Activated T-helper 2 cell treated with anti-CD3 and anti-CD28 coated beads, Interferon-gamma antibody, Interleukin-2, Interleukin-4, amounts not matched to agents 10 μg/mL and 5 μg/mL and 100 μg/mL, durations not matched to agents 14 hours and 24 hours and 36 hours (primary cell): ENCODE measurements at regions of chr1 and their contacts with region 1.

Region 1: GRCh38 chr1:205658943-205659581 is 21.2 kb downstream of the SLC45A3 start:
- DNase-seq: peak; percentile 65
- H3K4me3 Mint-ChIP-seq: no peak overlapping the region
- H3K27ac Mint-ChIP-seq: no peak overlapping the region
- H3K4me1 Mint-ChIP-seq: peaks cover 1% of the 10 kb centered on the region
- H3K27me3 Mint-ChIP-seq: no peaks in the 10 kb centered on the region

Region 2: DNA sequence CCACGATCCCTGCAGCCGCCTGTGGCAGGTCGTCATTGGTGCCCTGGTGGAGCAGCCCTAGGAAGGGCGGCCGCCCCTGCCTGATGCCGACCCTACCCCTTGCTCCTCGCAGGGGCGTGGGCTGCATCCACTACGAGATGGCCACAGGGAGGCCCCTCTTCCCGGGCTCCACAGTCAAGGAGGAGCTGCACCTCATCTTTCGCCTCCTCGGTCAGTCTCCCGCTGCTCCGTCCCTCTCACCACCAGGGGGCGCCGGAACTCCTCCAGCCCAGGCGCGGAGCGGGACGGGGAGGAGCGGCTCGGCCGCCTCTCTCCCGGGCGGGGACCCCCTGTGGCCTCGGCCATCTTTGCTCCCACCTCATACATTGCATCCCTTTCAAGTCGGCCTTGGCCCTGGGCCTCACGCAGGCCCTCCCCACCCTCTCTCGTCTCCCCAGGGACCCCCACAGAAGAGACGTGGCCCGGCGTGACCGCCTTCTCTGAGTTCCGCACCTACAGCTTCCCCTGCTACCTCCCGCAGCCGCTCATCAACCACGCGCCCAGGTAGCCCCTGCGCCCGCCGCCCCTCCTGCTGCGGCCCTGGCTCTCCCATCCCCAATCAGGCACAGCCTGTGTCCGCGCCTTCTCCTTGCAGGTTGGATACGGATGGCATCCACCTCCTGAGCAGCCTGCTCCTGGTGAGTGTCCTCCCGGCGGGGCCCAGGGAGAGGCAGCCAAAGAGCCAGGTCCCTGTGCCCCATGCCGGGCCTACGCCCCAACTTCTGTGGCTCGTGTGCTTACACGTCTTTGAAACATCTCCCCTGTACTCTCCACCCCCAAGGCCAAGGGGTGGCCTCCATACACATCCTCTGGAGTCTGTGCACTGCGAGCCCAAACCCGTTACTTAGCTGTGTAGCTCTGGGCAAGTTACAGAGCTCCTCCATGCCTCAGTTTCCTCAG is 129.9 kb before region 1 on chr1:
- intact Hi-C with region 1: loop called (anchors 1 kb)
- DNase-seq: peak; percentile 70
- H3K4me3 Mint-ChIP-seq: peak overlapping the region; percentile 37
- H3K27ac Mint-ChIP-seq: no peak overlapping the region
- H3K4me1 Mint-ChIP-seq: peaks cover 3% of the 10 kb centered on the region
- H3K27me3 Mint-ChIP-seq: peaks cover 11% of the 10 kb centered on the region

Region 3: GRCh38 chr1:205591522-205592351 is 67.3 kb before region 1 on chr1:
- intact Hi-C with region 1: loop called (anchors 2 kb)
- DNase-seq: peak; percentile 80
- H3K4me3 Mint-ChIP-seq: peak overlapping the region; percentile 82
- H3K27ac Mint-ChIP-seq: peak overlapping the region; percentile 75
- H3K4me1 Mint-ChIP-seq: peaks cover 51% of the 10 kb centered on the region
- H3K27me3 Mint-ChIP-seq: no peaks in the 10 kb centered on the region

Region 4: GRCh38 chr1:205645519-205645918 is 13.5 kb before region 1 on chr1:
- intact Hi-C with region 1: no loop called
- DNase-seq: no peak
- H3K4me3 Mint-ChIP-seq: no peak overlapping the region
- H3K27ac Mint-ChIP-seq: no peak overlapping the region
- H3K4me1 Mint-ChIP-seq: no peaks in the 10 kb centered on the region
- H3K27me3 Mint-ChIP-seq: peaks cover 4% of the 10 kb centered on the region

Region 5: DNA sequence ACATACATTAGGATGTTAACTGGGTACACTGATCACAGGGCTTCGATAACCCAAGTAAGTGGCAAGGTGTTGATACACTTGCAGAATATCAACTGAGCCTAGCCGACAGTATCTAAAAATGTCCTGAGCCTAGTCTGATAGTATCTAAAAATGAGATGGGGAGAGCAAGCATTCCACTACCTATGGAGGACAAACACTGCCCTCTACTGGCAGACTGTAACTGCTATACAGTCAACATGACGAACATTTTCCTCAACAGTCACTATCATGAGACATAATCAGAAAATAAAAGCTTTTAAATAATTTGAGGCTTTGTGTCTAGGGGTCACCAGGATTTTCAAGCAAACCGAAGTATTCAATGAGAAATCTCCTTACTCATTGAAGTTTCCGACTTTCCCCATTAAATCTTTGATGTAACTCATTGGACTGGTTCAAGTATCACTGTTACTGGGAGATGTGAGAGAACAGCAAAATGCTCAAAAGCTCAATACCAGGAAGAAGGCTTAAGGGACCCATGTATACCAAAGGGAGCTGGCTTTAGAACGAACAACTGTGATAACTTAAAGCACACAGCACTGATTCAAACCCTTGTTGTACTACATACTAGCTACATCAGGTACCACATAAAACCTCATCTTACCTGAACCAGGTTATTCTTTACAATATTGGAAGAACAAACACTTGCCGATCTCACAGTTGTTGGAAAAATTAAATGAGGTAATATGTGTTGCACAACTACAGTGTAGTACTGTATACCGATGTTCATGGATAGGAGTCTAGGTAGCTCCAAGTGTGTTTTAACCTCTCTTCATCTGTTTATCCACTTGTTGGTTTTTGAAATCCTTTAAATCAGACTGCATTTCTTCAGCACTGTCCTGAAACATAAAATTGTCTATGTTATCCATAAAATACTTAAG is 52.3 kb after region 1 on chr1:
- intact Hi-C with region 1: loop called (anchors 1 kb)
- DNase-seq: peak; percentile 48
- H3K4me3 Mint-ChIP-seq: no peak overlapping the region
- H3K27ac Mint-ChIP-seq: peak overlapping the region; percentile 77
- H3K4me1 Mint-ChIP-seq: peaks cover 19% of the 10 kb centered on the region
- H3K27me3 Mint-ChIP-seq: no peaks in the 10 kb centered on the region

Region 6: DNA sequence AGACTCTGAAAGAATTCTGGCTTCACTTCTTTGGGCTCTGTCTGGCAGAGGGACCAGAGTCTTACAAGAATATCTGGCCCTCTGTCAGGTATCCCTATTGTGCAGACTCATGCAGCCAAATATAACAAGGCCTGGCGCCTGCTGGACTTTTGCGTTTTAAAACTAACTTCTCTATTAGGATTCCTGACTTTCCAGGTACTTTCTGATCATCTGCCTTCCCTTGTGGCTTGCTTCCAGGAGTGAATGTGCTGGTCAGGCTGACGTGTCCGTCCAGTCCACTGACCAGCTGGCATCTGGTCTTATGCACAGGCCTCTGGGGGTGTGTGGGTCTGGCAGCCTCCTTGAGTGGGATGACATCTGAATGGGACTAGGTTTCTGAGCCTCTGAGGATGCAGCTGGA is 124.8 kb after region 1 on chr1:
- intact Hi-C with region 1: loop called (anchors 5 kb)
- DNase-seq: no peak
- H3K4me3 Mint-ChIP-seq: no peak overlapping the region
- H3K27ac Mint-ChIP-seq: no peak overlapping the region
- H3K4me1 Mint-ChIP-seq: peaks cover 12% of the 10 kb centered on the region
- H3K27me3 Mint-ChIP-seq: no peaks in the 10 kb centered on the region

Region 7: DNA sequence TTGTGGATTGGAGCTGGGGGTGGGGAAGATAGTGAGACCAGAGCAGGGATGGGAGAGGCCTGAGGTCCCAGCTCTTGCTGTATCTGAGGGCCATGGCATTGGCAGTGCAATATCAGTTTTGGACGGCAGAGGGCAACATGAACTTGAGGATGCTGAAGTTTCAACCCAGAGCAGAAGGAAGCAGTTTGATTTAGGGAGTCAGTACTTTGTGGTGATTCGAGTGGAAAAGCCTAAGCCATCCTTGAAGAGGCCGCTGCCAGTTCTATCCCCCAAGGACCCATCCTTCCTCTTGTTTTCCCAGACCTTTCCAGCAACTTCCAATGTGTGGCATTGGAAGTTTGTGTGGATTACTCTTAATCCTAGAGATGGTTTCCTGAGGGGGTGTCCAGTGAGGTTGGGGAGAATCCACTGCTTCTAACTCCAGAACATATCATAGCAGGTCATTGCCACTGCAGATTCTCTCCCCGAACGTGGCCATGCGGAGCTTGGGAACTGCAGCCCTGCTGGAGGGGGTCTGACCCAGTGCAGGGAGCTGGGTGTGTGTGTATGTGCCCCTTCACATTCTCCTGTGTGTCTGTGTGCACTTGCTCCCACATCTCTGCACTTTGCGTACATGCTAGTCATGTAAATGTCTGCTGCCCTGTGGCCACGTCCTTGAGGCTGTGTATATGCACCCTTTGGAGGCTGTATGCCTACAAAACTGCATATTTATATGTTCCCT is 260.1 kb after region 1 on chr1:
- intact Hi-C with region 1: loop called (anchors 10 kb)
- DNase-seq: peak; percentile 54
- H3K4me3 Mint-ChIP-seq: no peak overlapping the region
- H3K27ac Mint-ChIP-seq: no peak overlapping the region
- H3K4me1 Mint-ChIP-seq: no peaks in the 10 kb centered on the region
- H3K27me3 Mint-ChIP-seq: no peaks in the 10 kb centered on the region

Region 8: GRCh38 chr1:205977402-205978014 is 318.4 kb after region 1 on chr1:
- intact Hi-C with region 1: loop called (anchors 1 kb)
- DNase-seq: peak; percentile 56
- H3K4me3 Mint-ChIP-seq: no peak overlapping the region
- H3K27ac Mint-ChIP-seq: no peak overlapping the region
- H3K4me1 Mint-ChIP-seq: no peaks in the 10 kb centered on the region
- H3K27me3 Mint-ChIP-seq: peaks cover 3% of the 10 kb centered on the region